HEK293T (cell line): ENCODE measurements at regions of chr20 and their contacts with region 1.

Region 1: GRCh38 chr20:62875419-62876361 is 14.1 kb upstream of the TCFL5 start:
- DNase-seq: peak; percentile 90

Region 2: DNA sequence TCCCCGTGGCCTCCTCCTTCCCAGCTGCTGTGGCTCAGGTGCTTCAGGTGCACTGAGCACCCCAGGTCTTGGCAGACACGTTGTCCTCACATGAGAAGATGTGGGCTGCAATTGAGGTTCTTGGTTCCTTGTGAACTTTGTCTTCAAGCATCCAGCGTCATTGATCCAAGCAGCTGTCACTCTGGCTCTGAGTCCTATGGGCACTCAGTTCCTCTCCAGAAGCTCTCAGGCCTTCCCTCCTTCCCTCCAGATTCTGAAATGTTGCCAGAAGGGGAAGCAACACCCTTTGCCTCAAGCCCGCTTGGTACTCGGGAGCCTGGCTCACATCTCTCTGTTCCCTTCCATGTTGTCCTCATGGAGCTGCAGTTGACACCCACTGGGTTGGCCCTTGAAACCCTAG is 87.8 kb before region 1 on chr20:
- CTCF ChIA-PET with region 1: no interaction called
- POLR2A ChIA-PET with region 1: no interaction called
- DNase-seq: no peak

Region 3: GRCh38 chr20:62861726-62862336 is 13.9 kb before region 1 on chr20 and contains the start of gene TCFL5:
- CTCF ChIA-PET with region 1: no interaction called
- POLR2A ChIA-PET with region 1: interaction called, 13 read pairs
- DNase-seq: peak; percentile 96